Panc1 (cell line): ENCODE measurements at regions of chr1 and their contacts with region 1.

Region 1: GRCh38 chr1:72917927-72918326 is 635.6 kb upstream of the NEGR1 start:
- DNase-seq: no peak
- ATAC-seq: no peak
- H3K4me3 ChIP-seq: no peak overlapping the region
- H3K27ac ChIP-seq: no peak overlapping the region
- H3K4me1 ChIP-seq: no peaks in the 10 kb centered on the region
- H3K27me3 ChIP-seq: no peaks in the 10 kb centered on the region
- CTCF ChIP-seq: no peak

Region 2: GRCh38 chr1:72936151-72936740 is 18.3 kb after region 1 on chr1:
- CTCF ChIA-PET with region 1: no interaction called
- POLR2A ChIA-PET with region 1: no interaction called
- in situ Hi-C with region 1: no loop called
- intact Hi-C with region 1: loop called (anchors 2 kb)
- DNase-seq: no peak
- ATAC-seq: no peak
- H3K4me3 ChIP-seq: no peak overlapping the region
- H3K27ac ChIP-seq: no peak overlapping the region
- H3K4me1 ChIP-seq: no peaks in the 10 kb centered on the region
- H3K27me3 ChIP-seq: no peaks in the 10 kb centered on the region
- CTCF ChIP-seq: no peak

Region 3: DNA sequence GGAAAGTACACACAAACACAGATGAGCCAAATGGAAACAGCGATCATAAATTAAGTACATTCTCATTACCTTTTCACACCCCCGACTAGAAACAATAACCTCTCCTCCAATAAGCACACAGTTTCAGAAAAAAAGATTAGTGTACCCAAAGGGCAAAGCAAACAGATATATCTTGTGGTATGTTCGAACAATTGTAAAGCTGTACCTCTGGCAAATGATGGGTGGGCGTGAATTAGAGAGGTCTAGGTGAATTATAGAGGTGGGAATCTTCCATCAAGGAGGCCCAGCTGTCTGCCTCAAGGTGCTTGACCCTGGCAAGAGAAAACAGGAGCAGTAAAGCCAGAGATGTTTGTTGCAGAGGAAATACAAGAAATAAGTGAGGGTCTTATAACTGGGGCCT is 79.7 kb after region 1 on chr1:
- CTCF ChIA-PET with region 1: no interaction called
- POLR2A ChIA-PET with region 1: no interaction called
- in situ Hi-C with region 1: no loop called
- intact Hi-C with region 1: no loop called
- DNase-seq: no peak
- ATAC-seq: no peak
- H3K4me3 ChIP-seq: no peak overlapping the region
- H3K27ac ChIP-seq: no peak overlapping the region
- H3K4me1 ChIP-seq: no peaks in the 10 kb centered on the region
- H3K27me3 ChIP-seq: no peaks in the 10 kb centered on the region
- CTCF ChIP-seq: no peak